Activated CD4-positive, alpha-beta memory T cell treated with anti-CD3 and anti-CD28 coated beads for 36 hours (primary cell): ENCODE measurements at regions of chr2 and their contacts with region 1.

Region 1: DNA sequence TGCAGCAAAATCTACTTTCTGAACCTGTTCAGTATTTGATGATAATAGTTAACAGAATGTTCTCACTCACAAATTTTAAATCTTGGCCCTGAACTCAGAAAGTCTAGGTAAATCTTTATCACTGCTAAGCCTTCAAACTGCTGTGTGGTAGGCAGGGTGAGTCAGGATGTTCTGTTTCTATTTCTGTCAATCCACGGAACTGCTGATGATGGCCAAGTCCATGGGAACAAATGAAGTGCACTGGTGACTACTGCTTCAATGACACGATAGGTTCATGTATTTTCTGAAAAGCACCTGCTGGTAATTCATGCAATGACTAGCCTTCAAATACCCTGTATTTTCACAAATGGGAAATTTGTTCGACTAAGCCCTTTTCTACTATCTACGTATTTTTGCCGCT is 14.2 kb downstream of the NIFK start:
- DNase-seq: peak; percentile 74
- H3K4me3 Mint-ChIP-seq: peak overlapping the region; percentile 44
- H3K27ac Mint-ChIP-seq: peak overlapping the region; percentile 98
- H3K4me1 Mint-ChIP-seq: peaks cover 47% of the 10 kb centered on the region
- H3K27me3 Mint-ChIP-seq: no peaks in the 10 kb centered on the region

Region 2: GRCh38 chr2:121128754-121129659 is 593.5 kb before region 1 on chr2:
- CTCF ChIA-PET with region 1: no interaction called
- POLR2A ChIA-PET with region 1: no interaction called
- intact Hi-C with region 1: no loop called
- DNase-seq: peak; percentile 41
- H3K4me3 Mint-ChIP-seq: no peak overlapping the region
- H3K27ac Mint-ChIP-seq: no peak overlapping the region
- H3K4me1 Mint-ChIP-seq: no peaks in the 10 kb centered on the region
- H3K27me3 Mint-ChIP-seq: peaks cover 4% of the 10 kb centered on the region

Region 3: DNA sequence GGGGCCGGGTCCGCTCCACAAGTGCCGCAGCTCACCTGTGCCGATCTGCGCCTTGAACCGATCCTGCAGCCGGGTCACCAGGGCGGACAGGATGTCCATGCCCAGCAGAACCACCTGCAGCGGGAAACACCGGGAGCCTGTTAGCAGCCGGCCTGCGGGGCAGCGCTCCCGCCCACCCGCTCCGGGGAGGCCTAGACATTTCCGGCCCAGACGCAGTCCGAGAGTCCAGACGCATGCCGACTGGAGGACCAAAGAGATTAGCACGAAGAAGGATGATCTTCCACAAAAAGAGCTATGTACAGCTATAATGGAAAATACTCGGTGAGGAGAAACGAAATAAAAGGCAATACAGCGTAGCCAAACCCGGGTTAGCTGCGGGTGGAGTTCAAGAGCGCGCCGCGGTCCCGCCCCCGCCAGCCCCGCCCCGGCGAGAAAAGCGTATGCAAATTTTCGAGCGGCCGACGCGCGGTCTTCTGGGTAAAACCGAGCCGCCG is 192.2 kb before region 1 on chr2:
- CTCF ChIA-PET with region 1: interaction called, 26 read pairs
- POLR2A ChIA-PET with region 1: interaction called, 64 read pairs
- intact Hi-C with region 1: loop called (anchors 1 kb)
- DNase-seq: peak; percentile 88
- H3K4me3 Mint-ChIP-seq: peak overlapping the region; percentile 84
- H3K27ac Mint-ChIP-seq: peak overlapping the region; percentile 92
- H3K4me1 Mint-ChIP-seq: peaks cover 69% of the 10 kb centered on the region
- H3K27me3 Mint-ChIP-seq: peaks cover 4% of the 10 kb centered on the region

Region 4: GRCh38 chr2:121617042-121617599 is 105.4 kb before region 1 on chr2:
- CTCF ChIA-PET with region 1: interaction called, 10 read pairs
- POLR2A ChIA-PET with region 1: no interaction called
- intact Hi-C with region 1: no loop called
- DNase-seq: no peak
- H3K4me3 Mint-ChIP-seq: no peak overlapping the region
- H3K27ac Mint-ChIP-seq: no peak overlapping the region
- H3K4me1 Mint-ChIP-seq: peaks cover 7% of the 10 kb centered on the region
- H3K27me3 Mint-ChIP-seq: no peaks in the 10 kb centered on the region

Region 5: GRCh38 chr2:121699421-121700333 is 22.8 kb before region 1 on chr2:
- CTCF ChIA-PET with region 1: interaction called, 14 read pairs
- POLR2A ChIA-PET with region 1: interaction called, 28 read pairs
- intact Hi-C with region 1: loop called (anchors 1 kb)
- DNase-seq: peak; percentile 96
- H3K4me3 Mint-ChIP-seq: peak overlapping the region; percentile 74
- H3K27ac Mint-ChIP-seq: peak overlapping the region; percentile 95
- H3K4me1 Mint-ChIP-seq: peaks cover 45% of the 10 kb centered on the region
- H3K27me3 Mint-ChIP-seq: no peaks in the 10 kb centered on the region

Region 6: DNA sequence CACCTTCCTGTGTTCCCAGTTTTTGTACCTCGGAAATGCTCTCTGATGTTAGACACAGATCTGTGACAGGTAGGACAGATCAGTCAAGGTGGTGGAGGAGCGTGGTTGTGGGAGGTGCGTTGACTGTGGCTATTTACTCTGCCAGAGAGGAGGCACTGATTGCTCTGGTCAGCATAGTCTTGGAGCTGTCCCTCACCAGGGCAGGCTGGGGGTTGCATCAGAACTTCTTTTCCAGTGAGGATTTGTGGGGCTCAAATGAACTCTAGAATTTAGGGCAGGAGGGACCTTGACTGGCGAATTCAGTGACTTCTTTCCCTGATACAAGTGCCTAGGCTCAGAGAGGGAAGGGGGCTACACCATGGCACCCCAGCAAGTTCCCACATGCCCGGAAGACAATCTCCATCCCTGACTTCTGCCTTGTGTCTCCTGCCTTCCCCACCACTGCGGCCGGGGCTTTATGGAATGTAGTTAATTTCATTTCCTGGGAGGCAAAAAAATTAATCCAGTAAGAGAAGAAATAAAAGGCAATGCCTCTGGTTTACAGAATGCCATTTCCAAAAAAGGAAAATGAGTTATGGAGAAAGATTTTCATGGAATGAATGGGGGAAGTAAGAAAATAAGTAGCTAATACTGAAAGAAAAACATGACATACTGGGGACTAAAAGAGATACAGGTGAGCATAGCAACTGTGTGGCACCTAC is 11.9 kb before region 1 on chr2:
- CTCF ChIA-PET with region 1: no interaction called
- POLR2A ChIA-PET with region 1: no interaction called
- intact Hi-C with region 1: no loop called
- DNase-seq: no peak
- H3K4me3 Mint-ChIP-seq: no peak overlapping the region
- H3K27ac Mint-ChIP-seq: no peak overlapping the region
- H3K4me1 Mint-ChIP-seq: no peaks in the 10 kb centered on the region
- H3K27me3 Mint-ChIP-seq: no peaks in the 10 kb centered on the region

Region 7: DNA sequence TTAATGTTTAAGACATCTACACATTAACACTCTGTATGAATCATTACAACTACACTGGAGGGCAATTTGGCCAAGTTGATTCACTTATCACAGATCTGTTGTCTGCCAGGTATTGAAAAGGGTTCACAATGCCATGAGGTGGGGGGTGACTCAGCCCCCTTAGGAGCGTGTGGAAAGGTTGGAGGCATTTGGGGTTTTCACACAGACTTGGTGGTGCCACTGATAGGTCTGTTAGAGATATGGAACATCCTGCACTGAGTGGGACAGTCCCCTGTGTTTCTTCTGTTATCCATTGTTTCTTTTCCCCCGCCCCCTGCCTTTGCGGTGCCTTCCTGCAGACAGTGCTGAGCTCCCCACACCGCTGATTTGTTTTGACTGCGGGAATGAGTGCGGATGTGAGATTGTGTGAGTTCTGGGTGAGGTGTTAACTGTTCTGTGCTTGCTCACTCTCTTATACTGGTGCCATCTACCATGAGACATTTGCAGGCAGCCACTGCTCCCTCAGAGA is 23.6 kb after region 1 on chr2:
- CTCF ChIA-PET with region 1: no interaction called
- POLR2A ChIA-PET with region 1: no interaction called
- intact Hi-C with region 1: loop called (anchors 1 kb)
- DNase-seq: peak; percentile 77
- H3K4me3 Mint-ChIP-seq: no peak overlapping the region
- H3K27ac Mint-ChIP-seq: peak overlapping the region; percentile 82
- H3K4me1 Mint-ChIP-seq: peaks cover 13% of the 10 kb centered on the region
- H3K27me3 Mint-ChIP-seq: no peaks in the 10 kb centered on the region